Motor neuron (in vitro differentiated cells): ENCODE measurements at regions of chr2 and their contacts with region 1.

Region 1: GRCh38 chr2:201860636-201861066 is 54.3 kb downstream of the CDK15 start:
- ATAC-seq: peak; percentile 73 to 93 (median 84)
- H3K4me3 ChIP-seq: no peak overlapping the region
- H3K27ac ChIP-seq: no peak overlapping the region
- H3K4me1 ChIP-seq: peaks cover 17 to 32% of the 10 kb centered on the region in 2 donors

Region 2: DNA sequence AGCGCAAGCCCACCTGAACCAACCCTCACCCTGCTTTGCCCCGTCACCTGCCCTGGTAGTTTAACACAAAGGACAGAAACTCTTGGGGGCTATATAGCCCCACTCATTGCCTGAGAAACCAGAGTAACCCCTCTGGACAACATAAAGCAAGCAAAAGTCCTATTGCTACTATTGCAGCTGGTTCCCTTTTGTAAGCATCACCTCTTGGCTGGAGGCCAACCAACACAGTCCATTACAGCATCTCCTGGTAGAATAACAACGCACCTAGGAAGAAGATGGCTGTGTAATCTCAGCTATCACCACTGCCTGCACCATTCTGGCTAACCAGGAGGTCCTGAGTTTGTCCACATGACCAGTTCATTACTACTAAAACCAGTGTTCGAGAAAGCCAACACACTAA is 540.0 kb before region 1 on chr2:
- in situ Hi-C with region 1: no loop called
- ATAC-seq: no peak
- H3K4me3 ChIP-seq: no peak overlapping the region
- H3K27ac ChIP-seq: no peak overlapping the region
- H3K4me1 ChIP-seq: no peaks in the 10 kb centered on the region

Region 3: DNA sequence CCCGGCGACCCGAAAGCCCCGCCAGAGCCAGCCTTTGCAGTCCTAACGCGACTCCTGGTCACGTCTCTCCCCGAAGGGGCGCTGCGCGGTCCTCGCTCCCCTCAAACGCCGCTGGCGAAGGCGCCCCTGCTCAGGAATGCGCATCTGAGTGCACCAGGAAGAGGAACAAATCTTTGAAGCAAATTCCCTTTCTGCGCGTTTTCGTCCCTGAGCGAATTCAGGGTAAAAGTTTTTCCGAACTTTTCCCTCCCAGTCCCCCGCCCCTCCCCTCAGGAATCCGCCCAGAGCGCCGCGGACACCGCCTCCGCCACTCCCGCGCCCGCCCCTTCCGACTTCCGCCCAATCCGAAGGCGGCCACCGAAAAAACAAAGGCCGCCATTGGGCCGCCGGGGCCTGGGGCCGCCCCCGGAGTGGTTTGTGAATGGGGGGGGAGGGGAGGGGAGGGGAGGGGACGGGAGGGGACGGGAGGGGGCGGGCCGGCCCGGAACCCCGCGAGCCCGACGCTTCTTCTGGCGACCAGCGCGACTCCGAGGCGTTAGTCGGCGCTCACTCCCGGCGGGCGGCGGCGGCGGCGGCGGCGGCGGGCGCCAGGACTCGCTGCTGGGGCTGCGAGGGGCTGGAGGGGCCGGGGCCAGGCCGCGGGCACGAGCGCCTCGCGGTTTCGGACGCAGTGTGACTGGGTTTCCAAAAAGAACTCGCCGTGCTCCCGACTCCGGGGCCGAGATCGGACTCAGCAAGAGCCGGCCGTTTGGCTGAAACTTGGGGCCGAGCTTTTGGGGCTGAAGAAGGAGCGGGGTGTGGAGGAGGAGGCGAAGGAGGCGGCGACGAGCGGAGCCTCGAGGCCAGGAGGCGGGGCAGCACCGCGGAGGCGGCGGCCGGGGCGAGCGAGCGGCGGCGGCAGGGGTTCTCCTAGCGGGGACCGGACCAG is 172.9 kb after region 1 on chr2 and contains the start of gene FZD7:
- in situ Hi-C with region 1: loop called in 3 of 9 experiments (anchors 25 kb)
- ATAC-seq: peak; percentile 66 to 78 (median 70)
- H3K4me3 ChIP-seq: peak within 1 kb of the TSS; percentile 76 to 98 (median 87)
- H3K27ac ChIP-seq: peak within 1 kb of the TSS; percentile 79 to 92
- H3K4me1 ChIP-seq: peaks cover 7 to 16% of the 10 kb centered on the region in 2 donors
- total RNA-seq, gene FZD7: 1.6 to 105 (median 28.4) TPM

Region 4: DNA sequence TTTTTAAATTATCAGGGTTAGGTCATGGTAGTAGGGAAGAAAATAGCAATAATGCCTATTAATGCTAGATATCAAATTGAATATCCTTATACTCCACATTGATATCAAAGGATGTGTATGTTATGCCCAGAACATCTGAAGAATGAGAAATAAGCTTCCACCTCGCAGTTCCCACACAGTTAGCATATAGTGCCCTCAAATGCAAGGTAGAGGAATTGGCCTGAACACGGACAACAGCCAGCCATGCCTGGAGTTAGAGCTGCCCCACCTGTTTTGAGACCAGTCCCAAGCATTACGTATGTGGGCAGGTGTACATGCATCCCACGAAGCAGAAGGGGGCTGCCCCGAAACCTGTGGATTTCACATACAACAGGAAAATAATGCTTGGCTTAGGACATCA is 298.1 kb after region 1 on chr2:
- in situ Hi-C with region 1: loop called in 1 of 9 experiments (anchors 25 kb)
- ATAC-seq: peak in 3 of 8 experiments; percentile 42 to 66 (median 44)
- H3K4me3 ChIP-seq: no peak overlapping the region
- H3K27ac ChIP-seq: no peak overlapping the region
- H3K4me1 ChIP-seq: peaks cover 0 to 5% of the 10 kb centered on the region in 2 donors

Region 5: GRCh38 chr2:202178342-202178958 is 317.8 kb after region 1 on chr2:
- in situ Hi-C with region 1: loop called in 4 of 9 experiments (anchors 10 to 25 kb)
- ATAC-seq: peak; percentile 69 to 84 (median 78)
- H3K4me3 ChIP-seq: no peak overlapping the region
- H3K27ac ChIP-seq: no peak overlapping the region
- H3K4me1 ChIP-seq: no peaks in the 10 kb centered on the region

Region 6: GRCh38 chr2:202185816-202186221 is 325.2 kb after region 1 on chr2:
- in situ Hi-C with region 1: loop called in 3 of 9 experiments (anchors 10 to 25 kb)
- ATAC-seq: no peak
- H3K4me3 ChIP-seq: no peak overlapping the region
- H3K27ac ChIP-seq: no peak overlapping the region
- H3K4me1 ChIP-seq: no peaks in the 10 kb centered on the region